Ascending aorta (tissue), 2 donors: ENCODE measurements at regions of chr18 and their contacts with region 1.

Region 1: GRCh38 chr18:79588636-79589481 is 90.7 kb upstream of the CTDP1 start:
- DNase-seq: peak; percentile 82 to 97
- H3K4me3 ChIP-seq: peak overlapping the region in 1 of 2 donors; percentile 43
- H3K27ac ChIP-seq: peak overlapping the region; percentile 94 to 95
- H3K4me1 ChIP-seq: peaks cover 11 to 28% of the 10 kb centered on the region in 2 donors
- H3K27me3 ChIP-seq: no peaks in the 10 kb centered on the region
- CTCF ChIP-seq: peak in 1 of 3 experiments; percentile 20

Region 2: GRCh38 chr18:79393635-79394533 is 195.0 kb before region 1 on chr18:
- intact Hi-C with region 1: loop called (anchors 1 kb)
- DNase-seq: peak; percentile 63 to 94
- H3K4me3 ChIP-seq: peak overlapping the region; percentile 77 to 92
- H3K27ac ChIP-seq: peak overlapping the region; percentile 98 to 99
- H3K4me1 ChIP-seq: peaks cover 5 to 17% of the 10 kb centered on the region in 2 donors
- H3K27me3 ChIP-seq: no peaks in the 10 kb centered on the region
- CTCF ChIP-seq: no peak

Region 3: GRCh38 chr18:79496978-79497637 is 91.8 kb before region 1 on chr18:
- intact Hi-C with region 1: no loop called
- DNase-seq: peak in 1 of 2 donors; percentile 55
- H3K4me3 ChIP-seq: no peak overlapping the region
- H3K27ac ChIP-seq: no peak overlapping the region
- H3K4me1 ChIP-seq: no peaks in the 10 kb centered on the region
- H3K27me3 ChIP-seq: no peaks in the 10 kb centered on the region
- CTCF ChIP-seq: no peak

Region 4: DNA sequence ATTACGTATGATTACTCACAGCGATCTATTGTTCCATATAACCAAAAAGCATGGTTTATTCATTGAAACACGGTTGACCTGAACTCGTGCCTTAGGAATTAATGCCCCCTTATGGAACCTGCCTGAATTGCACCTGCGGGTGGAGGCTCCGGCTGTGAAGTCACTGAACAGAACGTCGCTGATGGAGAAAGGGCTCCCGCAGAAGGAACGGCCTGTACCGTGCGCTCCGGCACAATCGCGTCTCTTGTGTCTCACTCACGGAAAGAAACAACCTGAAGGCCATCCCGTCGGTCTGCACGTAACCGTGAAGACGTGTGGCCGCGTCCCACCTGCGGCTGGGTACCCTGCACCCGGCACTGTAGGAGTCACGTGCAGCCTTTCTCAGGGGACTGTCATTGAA is 60.0 kb before region 1 on chr18:
- intact Hi-C with region 1: loop called (anchors 2 kb)
- DNase-seq: peak in 1 of 2 donors; percentile 82
- H3K4me3 ChIP-seq: no peak overlapping the region
- H3K27ac ChIP-seq: no peak overlapping the region
- H3K4me1 ChIP-seq: peaks cover 5 to 13% of the 10 kb centered on the region in 2 donors
- H3K27me3 ChIP-seq: no peaks in the 10 kb centered on the region
- CTCF ChIP-seq: peak; percentile 76 to 92 (median 80)

Region 5: DNA sequence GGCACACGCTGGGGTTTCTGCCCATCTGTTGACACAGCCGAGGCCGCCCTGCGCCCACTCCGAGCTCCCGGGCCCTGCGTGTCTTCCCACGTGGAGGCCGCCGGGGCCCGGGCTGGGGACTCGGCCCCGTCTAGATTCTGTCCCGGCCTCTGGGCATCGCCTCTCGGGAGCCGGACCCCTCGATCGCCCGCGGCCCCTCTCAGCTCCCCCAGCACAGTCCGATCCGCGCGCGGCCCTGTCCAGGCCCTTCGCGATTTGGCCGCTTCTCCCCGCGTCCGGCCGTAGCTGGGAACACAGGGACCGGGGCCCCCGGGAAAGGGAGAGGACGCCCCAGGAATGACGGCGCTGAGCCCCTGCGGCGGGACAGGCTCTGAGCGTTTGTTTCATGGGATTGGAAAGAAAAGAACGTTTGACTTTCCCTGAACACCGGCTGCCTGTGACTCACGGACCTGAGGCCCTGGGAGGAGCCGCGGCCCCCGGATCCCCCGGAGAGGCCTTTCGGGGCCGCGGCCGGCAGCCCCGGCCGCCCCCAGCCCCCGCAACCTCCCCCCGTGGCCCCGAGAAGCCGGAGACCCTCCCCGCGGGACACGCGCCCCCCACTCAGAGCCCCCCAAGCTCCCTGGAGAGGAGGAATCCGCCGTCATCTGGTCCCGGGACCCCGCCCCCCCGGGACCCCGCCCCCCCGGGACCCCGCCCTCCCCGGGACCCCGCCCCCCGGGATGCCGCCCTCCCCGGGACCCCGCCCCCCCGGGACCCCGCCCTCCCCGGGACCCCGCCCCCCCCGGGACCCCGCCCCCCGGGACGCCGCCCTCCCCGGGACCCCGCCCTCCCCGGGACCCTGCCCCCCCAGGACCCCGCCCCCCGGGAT is 28.0 kb after region 1 on chr18:
- intact Hi-C with region 1: loop called (anchors 2 kb)
- DNase-seq: no peak
- H3K4me3 ChIP-seq: peak overlapping the region; percentile 25 to 44
- H3K27ac ChIP-seq: peak overlapping the region in 1 of 2 donors; percentile 43
- H3K4me1 ChIP-seq: no peaks in the 10 kb centered on the region
- H3K27me3 ChIP-seq: no peaks in the 10 kb centered on the region
- CTCF ChIP-seq: no peak

Region 6: GRCh38 chr18:79679111-79679872 is 90.4 kb after region 1 on chr18 and contains the start of gene CTDP1:
- intact Hi-C with region 1: loop called (anchors 1 kb)
- DNase-seq: peak; percentile 96 to 99
- H3K4me3 ChIP-seq: peak within 1 kb of the TSS; percentile 92 to 99
- H3K27ac ChIP-seq: peak within 1 kb of the TSS; percentile 98 to 100
- H3K4me1 ChIP-seq: peaks cover 2 to 18% of the 10 kb centered on the region in 2 donors
- H3K27me3 ChIP-seq: no peaks in the 10 kb centered on the region
- CTCF ChIP-seq: no peak
- total RNA-seq, gene CTDP1: 31.7 TPM